ENCODE measurements at regions of chr1 and their contacts with region 1.

Region 1: GRCh38 chr1:26787706-26788514 is at the start of gene PIGV:
- DNase-seq: peak; percentile 90
- H3K4me3 Mint-ChIP-seq: peak within 1 kb of the TSS; percentile 79
- H3K27ac Mint-ChIP-seq: peak within 1 kb of the TSS; percentile 100
- H3K4me1 Mint-ChIP-seq: peaks cover 65% of the 10 kb centered on the region
- H3K27me3 Mint-ChIP-seq: no peaks in the 10 kb centered on the region
- total RNA-seq, gene PIGV: 16.6 to 16.9 TPM

Region 2: GRCh38 chr1:26602378-26602959 is 185.4 kb before region 1 on chr1:
- CTCF ChIA-PET with region 1: interaction called, 221 read pairs
- POLR2A ChIA-PET with region 1: interaction called, 57 read pairs
- DNase-seq: peak; percentile 38
- H3K4me3 Mint-ChIP-seq: no peak overlapping the region
- H3K27ac Mint-ChIP-seq: no peak overlapping the region
- H3K4me1 Mint-ChIP-seq: peaks cover 11% of the 10 kb centered on the region
- H3K27me3 Mint-ChIP-seq: peaks cover 20% of the 10 kb centered on the region

Region 3: GRCh38 chr1:26695356-26696118 is 92.4 kb before region 1 on chr1 and contains the start of gene ARID1A:
- CTCF ChIA-PET with region 1: interaction called, 82 read pairs
- POLR2A ChIA-PET with region 1: interaction called, 516 read pairs
- DNase-seq: peak; percentile 98
- H3K4me3 Mint-ChIP-seq: peak within 1 kb of the TSS; percentile 85
- H3K27ac Mint-ChIP-seq: peak within 1 kb of the TSS; percentile 94
- H3K4me1 Mint-ChIP-seq: peaks cover 32% of the 10 kb centered on the region
- H3K27me3 Mint-ChIP-seq: no peaks in the 10 kb centered on the region
- total RNA-seq, gene ARID1A: 88.9 to 90.0 TPM

Region 4: DNA sequence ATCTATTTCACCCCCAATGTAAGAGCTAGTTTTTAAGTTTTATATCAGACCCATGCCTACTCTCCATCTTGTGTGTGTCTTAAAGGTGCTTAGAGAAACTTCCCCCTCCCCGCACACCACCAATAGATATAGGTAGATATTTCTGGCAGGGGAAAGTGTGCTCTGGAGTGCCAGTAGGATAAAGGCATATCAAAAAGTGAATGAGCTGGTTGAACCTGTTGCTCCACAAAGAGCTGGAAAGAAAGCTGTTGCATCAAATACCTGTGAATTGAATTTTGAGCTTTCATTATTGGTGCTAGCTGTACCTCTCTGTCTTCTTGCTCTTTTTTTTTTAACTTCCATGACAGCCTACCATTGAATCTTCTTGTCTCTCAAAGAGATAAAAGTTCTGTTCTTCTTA is 59.3 kb before region 1 on chr1:
- CTCF ChIA-PET with region 1: interaction called, 10 read pairs
- POLR2A ChIA-PET with region 1: interaction called, 12 read pairs
- DNase-seq: no peak
- H3K4me3 Mint-ChIP-seq: no peak overlapping the region
- H3K27ac Mint-ChIP-seq: no peak overlapping the region
- H3K4me1 Mint-ChIP-seq: peaks cover 67% of the 10 kb centered on the region
- H3K27me3 Mint-ChIP-seq: no peaks in the 10 kb centered on the region

Region 5: DNA sequence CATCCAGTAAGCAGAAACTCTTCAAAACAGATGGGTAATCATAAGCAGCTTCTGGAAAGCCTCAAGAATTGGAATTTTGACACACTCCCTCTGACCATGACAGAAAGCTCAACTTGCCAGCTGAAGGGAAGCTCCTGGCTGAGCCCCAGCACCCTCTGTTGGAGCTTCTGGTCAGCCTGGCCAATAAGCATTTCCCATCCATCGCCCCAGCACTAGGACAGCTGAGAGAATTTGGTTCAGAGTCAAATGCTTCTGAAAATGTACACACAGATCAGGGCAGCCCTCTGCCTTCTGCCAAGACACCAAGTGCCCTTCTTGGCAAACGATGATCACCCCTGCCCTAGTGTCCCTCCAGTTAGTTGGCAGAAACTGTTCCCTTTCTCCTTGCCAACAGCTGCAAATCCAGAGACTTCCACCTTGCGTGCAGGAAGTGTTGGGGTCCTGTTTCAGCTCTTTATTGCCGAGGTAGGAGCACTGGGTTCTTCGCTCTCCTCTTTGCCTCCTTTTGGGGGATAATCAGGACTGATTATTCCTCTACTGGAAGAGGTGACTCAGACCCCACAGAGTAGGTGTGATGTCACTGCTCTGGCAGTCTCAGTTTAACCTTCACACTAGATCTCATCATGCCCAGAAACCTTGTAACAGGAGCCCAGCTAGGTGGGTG is 11.7 kb after region 1 on chr1:
- CTCF ChIA-PET with region 1: interaction called, 81 read pairs
- POLR2A ChIA-PET with region 1: interaction called, 149 read pairs
- DNase-seq: peak; percentile 30
- H3K4me3 Mint-ChIP-seq: peak overlapping the region; percentile 52
- H3K27ac Mint-ChIP-seq: peak overlapping the region; percentile 89
- H3K4me1 Mint-ChIP-seq: peaks cover 55% of the 10 kb centered on the region
- H3K27me3 Mint-ChIP-seq: no peaks in the 10 kb centered on the region

Region 6: GRCh38 chr1:26864610-26865527 is 77.0 kb after region 1 on chr1:
- CTCF ChIA-PET with region 1: interaction called, 20 read pairs
- POLR2A ChIA-PET with region 1: interaction called, 65 read pairs
- DNase-seq: peak; percentile 97
- H3K4me3 Mint-ChIP-seq: peak overlapping the region; percentile 90
- H3K27ac Mint-ChIP-seq: peak overlapping the region; percentile 93
- H3K4me1 Mint-ChIP-seq: peaks cover 37% of the 10 kb centered on the region
- H3K27me3 Mint-ChIP-seq: no peaks in the 10 kb centered on the region

Region 7: GRCh38 chr1:26949926-26950319 is 162.0 kb after region 1 on chr1:
- CTCF ChIA-PET with region 1: no interaction called
- POLR2A ChIA-PET with region 1: no interaction called
- DNase-seq: no peak
- H3K4me3 Mint-ChIP-seq: no peak overlapping the region
- H3K27ac Mint-ChIP-seq: no peak overlapping the region
- H3K4me1 Mint-ChIP-seq: no peaks in the 10 kb centered on the region
- H3K27me3 Mint-ChIP-seq: no peaks in the 10 kb centered on the region